HAP-1 (cell line): ENCODE measurements at regions of chr20 and their contacts with region 1.

Region 1: DNA sequence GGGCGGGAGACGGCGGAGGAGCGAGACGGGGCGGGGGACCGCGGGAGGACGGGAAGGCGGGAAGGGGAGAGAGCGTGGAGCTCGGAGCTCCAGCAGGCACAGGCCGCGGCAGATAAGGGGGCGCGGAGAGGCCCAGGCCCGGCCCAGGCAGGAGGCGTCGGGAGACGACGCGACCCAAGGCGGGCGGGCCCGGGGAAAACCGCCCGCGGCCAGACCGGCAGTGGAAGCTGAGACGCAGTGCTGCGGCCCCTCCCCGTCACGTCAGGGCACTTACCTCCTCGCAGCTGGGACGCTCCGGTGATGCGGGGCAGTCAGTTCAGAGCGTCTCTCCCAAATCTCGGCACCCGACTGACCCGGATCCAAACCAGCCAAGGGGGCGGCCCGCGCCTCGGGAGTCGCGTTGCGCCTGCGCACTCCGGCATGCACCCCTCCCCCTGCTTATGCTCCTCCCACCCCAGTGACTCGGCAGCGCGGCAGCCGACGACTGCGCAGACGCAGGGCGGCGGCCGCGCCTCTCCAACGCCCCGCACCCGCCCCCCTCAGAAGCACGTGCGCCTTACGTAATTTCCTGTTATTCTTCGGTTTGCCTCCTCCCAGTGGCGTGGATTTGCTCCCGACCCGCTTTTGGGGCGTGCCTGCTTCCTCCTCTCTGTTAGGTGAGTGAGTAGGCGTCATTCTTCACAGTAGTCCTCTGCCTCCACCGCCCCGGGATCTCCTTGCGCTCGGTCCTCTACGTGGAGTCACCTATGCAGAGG is at the start of gene OSER1:
- DNase-seq: peak; percentile 90 to 96
- H3K4me3 ChIP-seq: peak within 1 kb of the TSS; percentile 88
- H3K4me1 ChIP-seq: peaks cover 25% of the 10 kb centered on the region
- H3K27me3 ChIP-seq: no peaks in the 10 kb centered on the region

Region 2: GRCh38 chr20:44460795-44461141 is 250.2 kb after region 1 on chr20:
- in situ Hi-C with region 1: loop called (anchors 10 kb)
- DNase-seq: peak; percentile 25 to 34
- H3K4me3 ChIP-seq: no peak overlapping the region
- H3K4me1 ChIP-seq: no peaks in the 10 kb centered on the region
- H3K27me3 ChIP-seq: no peaks in the 10 kb centered on the region